Activated naive CD4-positive, alpha-beta T cell treated with anti-CD3 and anti-CD28 coated beads, Interleukin-2, amount 10 ng/mL, durations not matched to agents 7 days and 5 days (primary cell): ENCODE measurements at regions of chr4 and their contacts with region 1.

Region 1: DNA sequence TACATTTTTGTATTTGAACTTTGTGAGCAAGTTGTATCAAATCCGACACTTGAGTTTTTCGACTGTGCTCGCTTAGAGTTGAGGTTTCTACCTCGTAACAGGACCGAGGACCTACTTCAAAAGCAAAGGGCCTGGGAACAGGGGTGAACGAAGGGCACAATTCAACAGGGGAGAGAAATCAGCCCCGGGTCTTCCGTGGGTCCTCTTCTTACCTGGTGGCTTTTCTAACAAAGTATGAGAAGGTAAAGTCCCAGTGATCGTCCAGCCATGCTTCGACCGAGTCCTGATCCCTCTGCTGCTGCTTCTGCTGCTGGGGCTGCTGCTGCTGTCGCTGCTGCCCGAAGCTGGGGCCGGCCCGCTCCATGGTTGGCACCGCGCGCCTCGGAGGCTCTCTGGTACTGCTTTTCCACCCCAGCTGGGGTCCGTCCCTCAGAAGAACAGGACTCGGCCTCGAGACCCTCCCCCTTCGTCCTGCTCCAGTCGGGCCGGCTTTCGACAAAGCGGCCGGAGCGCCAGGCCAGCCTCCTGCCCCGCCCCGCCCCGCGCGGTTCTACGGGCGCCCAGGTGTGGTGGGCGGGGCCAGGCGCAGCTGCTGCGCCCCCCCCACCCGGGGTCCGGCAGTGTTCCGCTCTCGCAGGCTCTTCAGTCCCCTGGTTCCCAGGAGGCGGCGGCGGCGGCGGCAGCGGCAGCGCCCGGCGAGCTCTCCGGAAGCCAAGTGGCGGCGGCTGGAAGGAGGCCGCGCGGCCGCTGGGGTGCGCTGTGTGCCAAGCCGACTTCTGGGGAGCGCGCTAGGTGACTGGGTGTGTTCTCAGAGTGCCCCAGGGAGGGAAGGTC is at the start of gene PDE5A:
- DNase-seq: peak; percentile 83
- H3K4me3 Mint-ChIP-seq: peak within 1 kb of the TSS; percentile 76
- H3K27ac Mint-ChIP-seq: no peak within 1 kb of the TSS
- H3K4me1 Mint-ChIP-seq: peaks cover 23% of the 10 kb centered on the region
- H3K27me3 Mint-ChIP-seq: peaks cover 43% of the 10 kb centered on the region

Region 2: DNA sequence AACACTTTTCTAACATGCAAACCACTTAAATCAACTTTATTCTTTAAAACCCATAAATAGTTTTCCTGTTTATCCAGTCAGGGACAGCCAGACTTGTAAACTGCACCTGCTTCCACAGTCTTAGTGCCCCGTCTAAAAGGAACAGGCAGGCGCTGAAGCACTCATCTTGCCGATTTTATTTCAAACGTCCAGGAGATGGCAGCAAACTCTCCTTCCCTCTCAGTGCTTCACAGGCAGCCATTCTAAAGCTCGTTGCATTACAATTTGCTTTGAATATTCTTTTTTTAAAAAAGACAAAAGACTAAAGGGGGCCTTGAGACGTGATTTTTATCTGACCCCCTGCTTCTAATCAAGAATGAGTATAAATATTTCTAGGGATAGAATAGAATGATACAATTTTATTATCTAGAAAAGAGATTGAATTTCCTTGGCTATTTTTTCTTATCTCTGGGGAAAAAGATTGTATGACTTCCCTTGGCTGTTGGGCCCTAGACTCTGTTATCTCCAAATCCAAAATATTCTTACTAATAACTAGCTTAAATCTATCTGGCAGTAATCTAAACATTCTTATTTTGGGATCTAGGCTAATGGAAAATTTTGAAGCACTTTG is 586.5 kb before region 1 on chr4:
- CTCF ChIA-PET with region 1: interaction called, 11 read pairs
- DNase-seq: peak; percentile 69
- H3K4me3 Mint-ChIP-seq: no peak overlapping the region
- H3K27ac Mint-ChIP-seq: no peak overlapping the region
- H3K4me1 Mint-ChIP-seq: no peaks in the 10 kb centered on the region
- H3K27me3 Mint-ChIP-seq: no peaks in the 10 kb centered on the region

Region 3: DNA sequence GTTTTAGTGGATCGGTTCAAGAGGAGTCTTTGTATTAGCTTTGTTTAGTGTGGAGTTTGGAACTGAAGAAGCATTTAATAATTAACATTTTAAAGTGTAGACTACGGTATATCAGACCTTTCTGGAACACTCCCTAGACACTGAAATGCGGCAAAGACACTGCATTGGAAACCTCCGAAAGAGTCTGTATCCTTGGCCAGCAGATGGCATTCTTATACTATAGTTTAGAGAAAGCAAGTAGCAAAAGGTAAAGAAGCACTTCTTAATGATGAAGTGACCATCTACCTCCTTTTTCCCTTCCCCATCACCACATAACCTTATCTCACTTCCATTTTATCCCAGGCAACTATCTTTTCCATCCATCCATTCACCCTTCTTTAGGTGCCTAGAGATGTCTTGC is 314.2 kb before region 1 on chr4:
- CTCF ChIA-PET with region 1: interaction called, 14 read pairs
- DNase-seq: peak; percentile 49
- H3K4me3 Mint-ChIP-seq: no peak overlapping the region
- H3K27ac Mint-ChIP-seq: no peak overlapping the region
- H3K4me1 Mint-ChIP-seq: no peaks in the 10 kb centered on the region
- H3K27me3 Mint-ChIP-seq: peaks cover 4% of the 10 kb centered on the region

Region 4: DNA sequence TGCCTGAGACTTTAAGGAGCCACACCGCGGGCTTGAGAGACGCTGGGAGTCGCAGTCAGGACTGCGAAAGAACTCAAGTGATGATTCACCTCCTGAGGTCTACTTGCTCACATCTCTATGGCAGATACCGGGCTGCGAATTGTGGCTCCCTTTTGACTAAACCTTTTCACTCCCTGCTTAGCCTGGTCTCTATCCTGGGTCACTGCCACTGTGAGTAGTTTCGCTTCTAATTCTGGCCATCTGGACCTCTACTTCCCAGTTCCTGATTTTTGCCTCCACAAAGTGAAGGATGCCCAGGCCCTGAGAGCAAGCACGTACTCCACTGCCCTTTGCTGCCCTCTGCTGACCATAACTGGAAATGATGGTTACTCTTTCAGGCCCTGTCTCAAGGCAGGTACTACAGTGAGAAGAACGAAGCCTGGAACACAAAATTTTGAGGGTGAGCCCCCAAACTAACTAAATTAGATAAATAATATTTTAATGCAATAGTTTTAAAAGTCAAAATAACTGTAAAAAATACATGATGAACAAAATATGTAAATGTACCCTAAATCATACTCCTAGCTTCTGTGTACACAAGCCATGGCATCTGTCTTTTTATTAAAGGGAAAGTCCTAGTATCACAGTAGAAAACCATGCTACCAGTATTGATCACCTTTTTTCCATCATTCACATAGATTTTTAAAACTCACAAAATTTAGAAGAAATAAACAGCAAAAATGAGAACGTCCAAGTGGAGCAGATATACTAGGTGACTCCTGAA is 421.4 kb after region 1 on chr4:
- CTCF ChIA-PET with region 1: interaction called, 26 read pairs
- DNase-seq: peak; percentile 80
- H3K4me3 Mint-ChIP-seq: no peak overlapping the region
- H3K27ac Mint-ChIP-seq: no peak overlapping the region
- H3K4me1 Mint-ChIP-seq: peaks cover 2% of the 10 kb centered on the region
- H3K27me3 Mint-ChIP-seq: no peaks in the 10 kb centered on the region

Region 5: DNA sequence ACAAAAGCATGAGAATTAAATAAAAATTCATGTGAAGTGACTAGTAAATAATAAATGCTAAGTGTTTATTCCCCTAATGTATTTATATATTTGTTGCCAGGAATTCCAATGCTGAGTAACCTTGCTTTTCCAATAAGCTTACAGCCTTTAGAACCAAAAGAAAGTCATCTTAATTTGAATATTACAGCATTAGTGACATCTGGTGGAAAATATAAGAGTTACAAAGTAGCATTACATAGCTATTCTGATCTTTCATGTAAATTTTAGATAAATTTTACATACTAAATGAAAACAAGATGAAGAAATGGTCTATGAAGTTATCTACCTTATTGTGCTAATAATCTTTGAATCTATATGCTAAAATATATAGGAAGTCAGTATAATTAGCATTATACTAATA is 427.7 kb after region 1 on chr4:
- CTCF ChIA-PET with region 1: interaction called, 26 read pairs
- DNase-seq: no peak
- H3K4me3 Mint-ChIP-seq: no peak overlapping the region
- H3K27ac Mint-ChIP-seq: no peak overlapping the region
- H3K4me1 Mint-ChIP-seq: peaks cover 6% of the 10 kb centered on the region
- H3K27me3 Mint-ChIP-seq: no peaks in the 10 kb centered on the region